Natural killer cell (primary cell): ENCODE measurements at regions of chr17 and their contacts with region 1.

Region 1: DNA sequence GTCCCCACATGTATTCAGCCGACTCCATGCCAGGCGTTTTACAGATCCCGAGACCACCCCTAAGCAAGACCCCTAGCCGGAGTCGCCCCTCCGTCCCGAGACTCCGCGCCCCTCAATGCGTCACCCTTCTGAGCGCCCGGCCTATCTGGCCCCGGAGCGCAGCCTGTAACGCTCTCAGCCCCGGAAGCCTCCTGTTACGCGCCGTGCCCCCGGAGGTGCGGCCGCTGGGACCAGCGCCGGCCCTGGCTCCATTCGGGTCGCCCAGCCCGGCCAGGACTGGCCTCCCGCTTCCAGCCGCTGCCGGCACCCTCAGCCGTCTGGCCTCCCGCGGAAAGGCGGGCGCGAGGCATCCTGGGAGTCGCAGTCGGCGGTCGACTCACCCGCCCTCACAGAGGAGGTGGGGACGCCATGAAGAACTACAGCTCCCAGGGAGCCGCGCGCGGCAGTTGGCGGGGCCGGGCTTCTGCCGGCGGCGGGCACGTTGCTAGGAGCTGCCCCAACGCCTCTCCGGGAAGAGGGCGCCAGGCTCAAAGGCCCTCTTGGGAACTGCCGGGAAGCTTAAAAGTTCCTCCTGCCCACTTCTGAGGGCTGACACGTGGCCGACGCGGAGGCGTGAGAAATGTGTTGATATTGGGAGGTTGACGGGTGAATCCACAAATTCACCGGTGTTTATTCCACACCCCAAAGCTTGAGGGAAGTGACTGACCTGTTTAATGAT is at the start of gene FBF1:
- DNase-seq: peak; percentile 82 to 91
- ATAC-seq: peak; percentile 99 to 100 (median 99)
- H3K4me3 ChIP-seq: peak within 1 kb of the TSS; percentile 62
- H3K4me3 Mint-ChIP-seq: peak within 1 kb of the TSS; percentile 89
- H3K27ac ChIP-seq: peak within 1 kb of the TSS; percentile 54
- H3K27ac Mint-ChIP-seq: peak within 1 kb of the TSS; percentile 65 to 92
- H3K4me1 ChIP-seq: peaks cover 13% of the 10 kb centered on the region
- H3K4me1 Mint-ChIP-seq: peaks cover 11 to 13% of the 10 kb centered on the region in 2 donors
- H3K27me3 ChIP-seq: no peaks in the 10 kb centered on the region
- H3K27me3 Mint-ChIP-seq: no peaks in the 10 kb centered on the region
- CTCF ChIP-seq: no peak
- total RNA-seq, gene FBF1: 24.9 to 34.0 (median 33.0) TPM

Region 2: DNA sequence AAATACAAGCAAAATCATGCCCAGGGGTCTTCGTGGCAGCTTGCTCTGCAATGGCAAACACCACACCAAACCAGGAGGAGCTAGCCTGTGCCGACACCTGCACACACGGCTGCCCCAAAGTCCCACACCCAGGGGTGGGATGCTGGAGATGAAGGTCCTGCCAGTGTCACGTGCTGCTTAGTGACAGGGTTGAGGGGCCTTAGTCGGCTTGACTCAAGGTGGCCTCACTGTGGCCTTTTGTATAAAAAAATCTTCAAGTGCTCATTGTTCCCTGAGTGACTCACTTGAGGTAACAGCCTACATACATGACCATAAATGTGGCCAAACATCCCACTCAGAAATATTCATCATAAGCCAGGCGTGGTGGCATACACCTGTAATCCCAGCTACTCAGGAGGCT is 51.4 kb before region 1 on chr17:
- intact Hi-C with region 1: loop called (anchors 10 kb)
- DNase-seq: no peak
- ATAC-seq: no peak
- H3K4me3 ChIP-seq: no peak overlapping the region
- H3K4me3 Mint-ChIP-seq: no peak overlapping the region
- H3K27ac ChIP-seq: no peak overlapping the region
- H3K27ac Mint-ChIP-seq: no peak overlapping the region
- H3K4me1 ChIP-seq: no peaks in the 10 kb centered on the region
- H3K4me1 Mint-ChIP-seq: peaks cover 9 to 11% of the 10 kb centered on the region in 2 donors
- H3K27me3 ChIP-seq: no peaks in the 10 kb centered on the region
- H3K27me3 Mint-ChIP-seq: no peaks in the 10 kb centered on the region
- CTCF ChIP-seq: no peak

Region 3: DNA sequence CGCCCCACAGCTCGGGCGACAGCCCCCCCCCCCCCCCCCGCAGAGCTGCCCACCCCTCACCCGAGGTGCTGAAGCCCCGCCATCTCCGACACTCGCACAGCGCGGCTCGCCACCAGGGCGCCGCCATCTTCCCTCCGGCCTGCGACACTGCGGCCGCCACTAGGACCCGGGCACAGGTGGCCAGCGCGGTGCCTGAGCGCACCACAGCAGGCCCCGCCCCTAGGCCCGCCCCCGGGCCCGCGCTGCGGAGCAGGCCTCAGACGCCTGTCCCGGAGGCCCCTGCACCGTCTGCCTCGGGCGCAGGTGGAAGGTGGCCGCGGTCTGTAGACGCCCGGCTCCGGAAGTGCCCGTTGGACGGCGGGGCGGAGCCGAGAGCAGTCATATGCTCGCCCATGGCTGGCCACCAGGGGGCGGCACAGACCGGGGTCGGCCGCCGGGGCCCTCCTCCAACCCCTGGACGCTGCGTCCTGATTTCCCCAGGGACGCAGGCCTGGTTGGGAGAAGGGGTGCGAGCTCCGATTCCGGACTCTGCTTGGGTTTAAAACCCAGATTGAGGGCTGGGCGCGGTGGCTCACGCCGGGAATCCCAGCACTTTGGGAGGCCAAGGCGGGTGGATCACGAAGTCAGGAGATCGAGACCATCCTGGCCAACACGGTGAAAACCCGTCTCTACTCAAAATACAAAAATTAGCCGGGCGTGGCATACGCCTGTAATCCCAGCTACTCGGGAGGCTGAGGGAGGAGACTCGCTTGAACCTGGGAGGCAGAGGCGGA is 35.9 kb before region 1 on chr17 and contains the start of gene MRPL38:
- intact Hi-C with region 1: loop called (anchors 2 kb)
- DNase-seq: peak; percentile 94 to 96
- ATAC-seq: peak; percentile 95 to 99 (median 95)
- H3K4me3 ChIP-seq: peak within 1 kb of the TSS; percentile 60
- H3K4me3 Mint-ChIP-seq: peak within 1 kb of the TSS; percentile 88
- H3K27ac ChIP-seq: peak within 1 kb of the TSS; percentile 87
- H3K27ac Mint-ChIP-seq: peak within 1 kb of the TSS; percentile 77 to 90
- H3K4me1 ChIP-seq: peaks cover 16% of the 10 kb centered on the region
- H3K4me1 Mint-ChIP-seq: peaks cover 0 to 14% of the 10 kb centered on the region in 2 donors
- H3K27me3 ChIP-seq: no peaks in the 10 kb centered on the region
- H3K27me3 Mint-ChIP-seq: no peaks in the 10 kb centered on the region
- CTCF ChIP-seq: peak; percentile 98
- total RNA-seq, gene MRPL38: 68.6 to 110 (median 96.7) TPM

Region 4: DNA sequence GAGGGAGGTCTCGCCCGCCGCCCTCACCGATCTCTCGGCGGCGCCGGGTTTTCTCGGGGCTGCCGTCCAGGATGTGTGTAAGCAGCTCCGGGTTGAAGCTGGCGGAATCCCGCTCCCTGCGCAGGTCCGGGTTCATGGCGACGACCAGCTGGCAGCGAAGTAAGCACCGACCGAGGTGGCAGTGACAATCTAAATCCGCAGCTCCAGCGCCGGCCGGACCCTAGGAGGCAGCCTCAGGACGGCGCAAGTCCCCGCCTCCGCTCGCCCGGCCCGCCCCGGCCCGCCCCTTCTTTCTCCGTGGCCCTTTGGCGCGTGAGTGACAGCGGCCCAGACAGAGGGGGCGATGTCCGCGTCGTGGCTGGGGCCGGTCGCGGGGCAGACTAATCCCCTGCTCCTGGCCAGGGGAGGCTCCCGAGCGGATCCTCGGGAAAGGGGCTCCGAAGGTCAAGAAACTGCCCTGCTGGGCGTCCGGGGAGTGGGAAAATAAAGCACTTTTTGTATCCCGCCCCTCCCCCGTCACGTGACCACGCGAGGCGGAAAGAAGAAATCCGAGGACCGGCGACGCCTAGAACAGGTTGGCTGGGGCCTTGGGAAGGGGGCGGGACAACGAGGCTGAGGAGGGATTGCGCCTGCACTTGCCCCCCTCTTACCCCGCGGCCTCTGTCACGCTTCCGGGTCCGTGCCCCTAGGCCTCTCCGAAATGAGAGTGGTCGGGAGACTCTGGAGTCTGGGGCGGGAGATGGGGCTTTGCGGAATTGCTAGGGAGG is 38.2 kb after region 1 on chr17 and contains the starts of genes ACOX1 and TEN1:
- intact Hi-C with region 1: loop called (anchors 1 kb)
- DNase-seq: peak; percentile 90 to 98
- ATAC-seq: peak; percentile 90 to 97 (median 91)
- H3K4me3 ChIP-seq: peak within 1 kb of the TSS; percentile 96
- H3K4me3 Mint-ChIP-seq: peak within 1 kb of the TSS; percentile 96
- H3K27ac ChIP-seq: peak within 1 kb of the TSS; percentile 93
- H3K27ac Mint-ChIP-seq: peak within 1 kb of the TSS; percentile 99 to 100
- H3K4me1 ChIP-seq: peaks cover 19% of the 10 kb centered on the region
- H3K4me1 Mint-ChIP-seq: peaks cover 28 to 33% of the 10 kb centered on the region in 2 donors
- H3K27me3 ChIP-seq: no peaks in the 10 kb centered on the region
- H3K27me3 Mint-ChIP-seq: no peaks in the 10 kb centered on the region
- CTCF ChIP-seq: peak; percentile 33
- total RNA-seq, gene ACOX1: 22.8 to 48.2 (median 28.2) TPM
- total RNA-seq, gene TEN1: 23.0 to 30.7 (median 24.3) TPM